Naive thymus-derived CD4-positive, alpha-beta T cell (primary cell): ENCODE measurements at regions of chrX and their contacts with region 1.

Region 1: GRCh38 chrX:47233337-47234113 is 716 bp downstream of the USP11 start:
- DNase-seq: peak; percentile 71 to 97 (median 94)
- ATAC-seq: peak; percentile 92
- H3K4me3 ChIP-seq: peak overlapping the region; percentile 74
- H3K4me3 Mint-ChIP-seq: peak overlapping the region; percentile 84 to 98 (median 90)
- H3K27ac ChIP-seq: peak overlapping the region; percentile 99
- H3K27ac Mint-ChIP-seq: peak overlapping the region; percentile 94 to 100 (median 98)
- H3K4me1 ChIP-seq: peaks cover 0 to 14% of the 10 kb centered on the region in 2 donors
- H3K4me1 Mint-ChIP-seq: peaks cover 8 to 49% (median 24%) of the 10 kb centered on the region in 7 donors
- H3K27me3 ChIP-seq: no peaks in the 10 kb centered on the region
- H3K27me3 Mint-ChIP-seq: peaks cover 0 to 4% (median 0%) of the 10 kb centered on the region in 5 donors

Region 2: GRCh38 chrX:46251755-46252154 is 981.8 kb before region 1 on chrX:
- CTCF ChIA-PET with region 1: no interaction called
- POLR2A ChIA-PET with region 1: no interaction called
- intact Hi-C with region 1: no loop called
- DNase-seq: no peak
- ATAC-seq: no peak
- H3K4me3 ChIP-seq: no peak overlapping the region
- H3K4me3 Mint-ChIP-seq: no peak overlapping the region
- H3K27ac ChIP-seq: no peak overlapping the region
- H3K27ac Mint-ChIP-seq: no peak overlapping the region
- H3K4me1 ChIP-seq: no peaks in the 10 kb centered on the region
- H3K4me1 Mint-ChIP-seq: peaks cover 0 to 2% (median 0%) of the 10 kb centered on the region in 7 donors
- H3K27me3 ChIP-seq: no peaks in the 10 kb centered on the region
- H3K27me3 Mint-ChIP-seq: no peaks in the 10 kb centered on the region

Region 3: DNA sequence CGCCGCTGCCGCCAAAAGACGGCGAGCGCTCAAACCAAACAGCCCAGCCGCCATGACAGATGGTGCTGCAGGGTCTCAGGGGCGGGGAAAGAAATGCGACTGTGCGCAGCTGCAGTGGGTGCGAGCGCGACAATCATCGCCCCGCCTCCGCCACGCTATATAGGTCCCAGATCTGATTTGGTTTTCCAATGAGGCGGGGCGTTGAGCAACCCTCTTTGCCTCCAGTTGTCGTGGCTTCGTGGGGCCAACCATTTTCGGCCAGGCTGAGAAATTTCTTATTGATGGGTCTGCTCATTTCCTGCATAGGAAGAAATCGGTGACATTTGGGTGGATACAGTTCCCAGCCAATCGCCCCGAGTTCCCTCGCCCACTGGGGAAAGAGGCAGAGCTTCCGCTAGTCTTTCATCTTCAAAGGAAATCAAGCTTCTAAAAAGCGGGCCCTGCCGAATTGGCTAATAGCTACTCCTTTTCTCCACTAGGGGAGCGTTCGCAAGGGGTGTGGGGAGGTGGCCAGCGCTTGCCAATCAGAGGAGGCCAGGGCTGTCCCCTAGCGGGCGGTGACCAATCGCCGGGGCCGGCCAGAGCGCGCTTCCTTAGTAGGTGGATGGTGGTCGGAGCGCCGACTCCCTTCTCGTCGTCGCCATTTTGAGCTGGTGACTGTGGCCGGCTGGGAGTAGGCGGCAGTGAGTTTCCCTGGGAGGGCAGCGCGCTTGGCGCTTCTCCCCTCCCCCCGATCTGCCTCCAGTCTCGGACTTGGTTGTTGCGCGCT is 88.7 kb before region 1 on chrX and contains the starts of genes NDUFB11 and RBM10:
- CTCF ChIA-PET with region 1: no interaction called
- POLR2A ChIA-PET with region 1: interaction called, 5 read pairs
- intact Hi-C with region 1: loop called (anchors 1 kb)
- DNase-seq: peak; percentile 64 to 90 (median 87)
- ATAC-seq: peak; percentile 95
- H3K4me3 ChIP-seq: peak within 1 kb of the TSS; percentile 77
- H3K4me3 Mint-ChIP-seq: peak within 1 kb of the TSS; percentile 92 to 99 (median 96)
- H3K27ac ChIP-seq: peak within 1 kb of the TSS; percentile 94
- H3K27ac Mint-ChIP-seq: peak within 1 kb of the TSS; percentile 93 to 99 (median 96)
- H3K4me1 ChIP-seq: peaks cover 6 to 12% of the 10 kb centered on the region in 2 donors
- H3K4me1 Mint-ChIP-seq: peaks cover 6 to 42% (median 26%) of the 10 kb centered on the region in 7 donors
- H3K27me3 ChIP-seq: no peaks in the 10 kb centered on the region
- H3K27me3 Mint-ChIP-seq: no peaks in the 10 kb centered on the region
- total RNA-seq, gene NDUFB11: 51.3 to 92.5 (median 55.2) TPM
- total RNA-seq, gene RBM10: 31.8 to 55.6 (median 47.6) TPM

Region 4: GRCh38 chrX:47179221-47179920 is 54.2 kb before region 1 on chrX:
- CTCF ChIA-PET with region 1: no interaction called
- POLR2A ChIA-PET with region 1: no interaction called
- intact Hi-C with region 1: no loop called
- DNase-seq: no peak
- ATAC-seq: no peak
- H3K4me3 ChIP-seq: no peak overlapping the region
- H3K4me3 Mint-ChIP-seq: no peak overlapping the region
- H3K27ac ChIP-seq: no peak overlapping the region
- H3K27ac Mint-ChIP-seq: no peak overlapping the region
- H3K4me1 ChIP-seq: no peaks in the 10 kb centered on the region
- H3K4me1 Mint-ChIP-seq: peaks cover 0 to 3% (median 0%) of the 10 kb centered on the region in 7 donors
- H3K27me3 ChIP-seq: no peaks in the 10 kb centered on the region
- H3K27me3 Mint-ChIP-seq: no peaks in the 10 kb centered on the region

Region 5: GRCh38 chrX:47278691-47279090 is 45.2 kb after region 1 on chrX:
- CTCF ChIA-PET with region 1: no interaction called
- POLR2A ChIA-PET with region 1: no interaction called
- intact Hi-C with region 1: no loop called
- DNase-seq: no peak
- ATAC-seq: no peak
- H3K4me3 ChIP-seq: no peak overlapping the region
- H3K4me3 Mint-ChIP-seq: peak overlapping the region in 1 of 10 donors; percentile 59
- H3K27ac ChIP-seq: no peak overlapping the region
- H3K27ac Mint-ChIP-seq: no peak overlapping the region
- H3K4me1 ChIP-seq: no peaks in the 10 kb centered on the region
- H3K4me1 Mint-ChIP-seq: peaks cover 0 to 4% (median 0%) of the 10 kb centered on the region in 7 donors
- H3K27me3 ChIP-seq: no peaks in the 10 kb centered on the region
- H3K27me3 Mint-ChIP-seq: no peaks in the 10 kb centered on the region

Region 6: DNA sequence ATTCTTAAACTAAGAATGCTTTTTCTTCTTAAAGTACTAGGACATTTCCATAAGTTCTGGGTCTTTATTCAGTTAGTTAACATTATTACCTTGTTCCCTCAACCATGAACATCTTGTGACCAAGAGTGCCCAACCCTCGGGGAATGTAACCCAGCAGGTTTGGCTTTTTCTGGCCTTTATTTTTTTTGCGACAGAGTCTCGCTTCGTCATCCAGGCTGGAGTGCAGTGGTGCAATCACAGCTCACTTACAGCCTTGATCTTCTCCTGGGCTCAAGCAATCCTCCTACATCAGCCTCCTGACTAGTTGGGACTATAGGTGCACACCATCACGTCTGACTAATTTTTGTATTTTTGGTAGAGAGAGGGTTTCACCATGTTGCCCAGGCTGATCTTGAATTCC is 64.3 kb after region 1 on chrX:
- CTCF ChIA-PET with region 1: no interaction called
- POLR2A ChIA-PET with region 1: no interaction called
- intact Hi-C with region 1: no loop called
- DNase-seq: no peak
- ATAC-seq: no peak
- H3K4me3 ChIP-seq: no peak overlapping the region
- H3K4me3 Mint-ChIP-seq: no peak overlapping the region
- H3K27ac ChIP-seq: no peak overlapping the region
- H3K27ac Mint-ChIP-seq: no peak overlapping the region
- H3K4me1 ChIP-seq: no peaks in the 10 kb centered on the region
- H3K4me1 Mint-ChIP-seq: peaks cover 0 to 4% (median 0%) of the 10 kb centered on the region in 7 donors
- H3K27me3 ChIP-seq: no peaks in the 10 kb centered on the region
- H3K27me3 Mint-ChIP-seq: no peaks in the 10 kb centered on the region

Region 7: GRCh38 chrX:47311932-47312774 is 78.6 kb after region 1 on chrX:
- CTCF ChIA-PET with region 1: no interaction called
- POLR2A ChIA-PET with region 1: no interaction called
- intact Hi-C with region 1: loop called in 1 of 2 experiments (anchors 5 kb)
- DNase-seq: peak; percentile 6 to 57 (median 39)
- ATAC-seq: peak; percentile 69
- H3K4me3 ChIP-seq: no peak overlapping the region
- H3K4me3 Mint-ChIP-seq: no peak overlapping the region
- H3K27ac ChIP-seq: no peak overlapping the region
- H3K27ac Mint-ChIP-seq: no peak overlapping the region
- H3K4me1 ChIP-seq: no peaks in the 10 kb centered on the region
- H3K4me1 Mint-ChIP-seq: no peaks in the 10 kb centered on the region
- H3K27me3 ChIP-seq: no peaks in the 10 kb centered on the region
- H3K27me3 Mint-ChIP-seq: no peaks in the 10 kb centered on the region

Region 8: GRCh38 chrX:47361538-47362511 is 128.3 kb after region 1 on chrX:
- CTCF ChIA-PET with region 1: no interaction called
- POLR2A ChIA-PET with region 1: no interaction called
- intact Hi-C with region 1: loop called in 1 of 2 experiments (anchors 1 kb)
- DNase-seq: peak in 3 of 9 donors; percentile 8 to 16 (median 10)
- ATAC-seq: peak; percentile 75
- H3K4me3 ChIP-seq: no peak overlapping the region
- H3K4me3 Mint-ChIP-seq: peak overlapping the region in 5 of 10 donors; percentile 3 to 29 (median 24)
- H3K27ac ChIP-seq: no peak overlapping the region
- H3K27ac Mint-ChIP-seq: peak overlapping the region in 4 of 9 donors; percentile 15 to 40 (median 31)
- H3K4me1 ChIP-seq: peaks cover 6 to 9% of the 10 kb centered on the region in 2 donors
- H3K4me1 Mint-ChIP-seq: peaks cover 10 to 48% (median 30%) of the 10 kb centered on the region in 7 donors
- H3K27me3 ChIP-seq: no peaks in the 10 kb centered on the region
- H3K27me3 Mint-ChIP-seq: no peaks in the 10 kb centered on the region